Activated CD4-positive, alpha-beta memory T cell treated with anti-CD3 and anti-CD28 coated beads, Interleukin-2, amount 10 ng/mL, durations not matched to agents 7 days and 5 days (primary cell): ENCODE measurements at regions of chr1 and their contacts with region 1.

Region 1: DNA sequence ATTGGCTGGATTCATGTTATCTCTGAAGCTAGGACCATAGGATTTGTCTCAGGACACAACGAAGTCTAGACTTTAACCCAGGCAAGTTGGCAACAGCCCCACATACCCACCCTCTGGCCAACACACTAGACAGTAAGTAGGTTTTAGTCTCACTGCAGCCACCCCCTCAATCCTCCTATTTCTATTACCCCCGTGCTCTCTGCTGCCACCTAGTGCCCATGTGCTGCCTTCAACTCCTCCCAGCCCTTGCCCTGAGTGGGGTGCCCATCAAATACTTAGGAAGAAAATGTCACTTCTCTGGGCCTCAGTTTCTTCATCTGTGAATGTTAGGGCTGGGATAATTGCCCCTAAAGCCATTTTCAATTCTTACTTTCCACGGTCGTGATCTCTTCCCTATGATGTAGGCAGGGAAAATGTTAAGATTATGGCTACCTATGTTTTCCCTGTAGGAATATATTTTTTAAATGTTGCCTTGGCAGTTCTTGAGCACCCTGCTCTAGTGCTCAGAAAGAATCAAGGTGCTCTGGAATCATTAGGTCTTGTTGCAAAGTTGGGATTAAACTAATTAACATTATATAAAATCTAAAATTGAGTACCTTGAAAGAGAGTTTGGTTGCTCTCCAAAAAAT is 213.0 kb downstream of the LMX1A start:
- DNase-seq: peak; percentile 46
- H3K4me3 Mint-ChIP-seq: no peak overlapping the region
- H3K27ac Mint-ChIP-seq: no peak overlapping the region
- H3K4me1 Mint-ChIP-seq: no peaks in the 10 kb centered on the region
- H3K27me3 Mint-ChIP-seq: peaks cover 7% of the 10 kb centered on the region

Region 2: GRCh38 chr1:165129568-165130164 is 13.9 kb before region 1 on chr1:
- CTCF ChIA-PET with region 1: interaction called, 10 read pairs
- POLR2A ChIA-PET with region 1: no interaction called
- DNase-seq: peak; percentile 56
- H3K4me3 Mint-ChIP-seq: no peak overlapping the region
- H3K27ac Mint-ChIP-seq: no peak overlapping the region
- H3K4me1 Mint-ChIP-seq: no peaks in the 10 kb centered on the region
- H3K27me3 Mint-ChIP-seq: peaks cover 4% of the 10 kb centered on the region

Region 3: DNA sequence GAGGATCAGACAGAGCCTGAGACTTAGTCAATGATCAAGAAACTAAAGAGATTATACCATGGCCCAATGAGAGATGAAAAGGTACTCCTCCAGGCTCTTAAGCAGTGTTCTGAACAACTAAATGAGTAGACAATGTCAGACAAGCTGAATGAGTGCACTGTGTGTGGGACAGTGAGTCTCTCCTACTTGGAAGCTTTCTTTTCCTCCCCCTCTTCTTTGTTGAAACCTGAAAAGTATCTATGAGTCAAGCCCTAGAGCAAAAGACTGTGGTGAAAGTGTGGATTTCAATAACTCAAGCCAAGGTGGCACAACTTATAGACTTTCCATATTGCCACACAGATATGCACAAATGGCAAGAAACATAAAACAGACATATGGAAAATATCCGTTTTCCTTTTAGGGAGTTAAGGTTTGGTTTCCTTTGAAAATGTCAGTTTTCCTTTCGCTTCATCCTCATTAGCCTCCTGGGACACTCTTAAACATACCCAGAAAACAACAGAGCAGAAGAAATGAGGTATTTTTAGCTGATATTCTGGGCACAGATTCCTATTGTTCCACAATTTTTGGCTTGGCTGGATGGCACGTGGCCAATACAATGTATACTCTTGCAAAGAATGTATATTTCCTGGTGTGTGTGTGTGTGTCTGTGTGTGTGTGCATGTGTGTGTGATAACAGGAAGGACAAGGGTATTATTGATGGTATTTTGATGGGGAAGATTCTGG is 116.3 kb after region 1 on chr1:
- CTCF ChIA-PET with region 1: no interaction called
- POLR2A ChIA-PET with region 1: no interaction called
- DNase-seq: no peak
- H3K4me3 Mint-ChIP-seq: no peak overlapping the region
- H3K27ac Mint-ChIP-seq: no peak overlapping the region
- H3K4me1 Mint-ChIP-seq: no peaks in the 10 kb centered on the region
- H3K27me3 Mint-ChIP-seq: peaks cover 12% of the 10 kb centered on the region